ENCODE measurements at regions of chr2 and their contacts with region 1.

Region 1: DNA sequence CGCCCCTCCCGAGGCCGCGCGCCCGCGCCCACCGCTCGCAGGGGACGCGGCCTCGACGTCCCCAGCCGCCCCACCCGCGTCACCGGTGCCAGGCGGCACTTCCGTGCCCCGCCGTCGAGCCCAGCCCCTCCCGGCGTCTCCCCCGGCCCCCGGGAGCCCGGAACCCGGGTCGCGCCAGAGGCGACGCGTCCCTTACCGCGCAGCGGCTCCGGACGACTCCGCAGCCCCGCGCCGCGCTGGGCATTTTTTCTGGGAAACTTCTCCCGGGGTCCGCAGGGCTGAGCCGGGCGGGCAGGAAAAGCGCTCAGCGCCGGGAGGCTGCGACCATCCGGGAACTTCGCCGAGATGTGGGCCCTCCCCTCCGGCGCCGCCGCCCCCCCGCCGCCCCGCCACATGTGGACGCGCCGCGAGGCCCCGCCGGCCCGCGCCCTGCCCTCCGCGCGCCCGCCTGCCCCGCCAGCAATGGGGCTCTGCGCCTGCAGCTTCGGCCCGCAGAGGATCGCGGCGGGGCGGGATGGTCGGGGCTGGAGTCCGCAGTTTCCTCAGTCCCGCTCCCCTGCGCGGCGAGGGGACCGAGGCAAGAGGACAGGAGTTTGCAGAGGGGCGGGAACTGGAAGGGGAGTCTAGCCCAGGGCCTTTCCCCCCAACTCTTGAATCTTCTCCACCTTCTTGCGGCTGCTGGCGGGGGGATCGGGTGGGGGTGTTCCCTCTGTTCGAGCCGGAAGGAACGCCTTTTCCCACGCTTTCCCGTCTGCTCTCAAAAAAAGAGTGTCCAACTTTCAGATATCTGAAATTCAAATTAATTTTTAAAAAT is 81.5 kb downstream of the CHRNA1 start:
- DNase-seq: peak; percentile 70
- ATAC-seq: peak; percentile 70
- H3K4me3 Mint-ChIP-seq: peak overlapping the region; percentile 81
- H3K27ac Mint-ChIP-seq: peak overlapping the region; percentile 88
- H3K4me1 Mint-ChIP-seq: peaks cover 70% of the 10 kb centered on the region
- H3K27me3 Mint-ChIP-seq: no peaks in the 10 kb centered on the region

Region 2: GRCh38 chr2:174536304-174536703 is 146.5 kb before region 1 on chr2:
- CTCF ChIA-PET with region 1: no interaction called
- POLR2A ChIA-PET with region 1: no interaction called
- DNase-seq: no peak
- ATAC-seq: no peak
- H3K4me3 Mint-ChIP-seq: no peak overlapping the region
- H3K27ac Mint-ChIP-seq: no peak overlapping the region
- H3K4me1 Mint-ChIP-seq: peaks cover 3% of the 10 kb centered on the region
- H3K27me3 Mint-ChIP-seq: no peaks in the 10 kb centered on the region

Region 3: GRCh38 chr2:174593574-174594203 is 89.1 kb before region 1 on chr2:
- CTCF ChIA-PET with region 1: interaction called, 197 read pairs
- POLR2A ChIA-PET with region 1: interaction called, 33 read pairs
- DNase-seq: peak; percentile 89
- ATAC-seq: peak; percentile 73
- H3K4me3 Mint-ChIP-seq: peak overlapping the region; percentile 80
- H3K27ac Mint-ChIP-seq: peak overlapping the region; percentile 97
- H3K4me1 Mint-ChIP-seq: peaks cover 47% of the 10 kb centered on the region
- H3K27me3 Mint-ChIP-seq: no peaks in the 10 kb centered on the region

Region 4: DNA sequence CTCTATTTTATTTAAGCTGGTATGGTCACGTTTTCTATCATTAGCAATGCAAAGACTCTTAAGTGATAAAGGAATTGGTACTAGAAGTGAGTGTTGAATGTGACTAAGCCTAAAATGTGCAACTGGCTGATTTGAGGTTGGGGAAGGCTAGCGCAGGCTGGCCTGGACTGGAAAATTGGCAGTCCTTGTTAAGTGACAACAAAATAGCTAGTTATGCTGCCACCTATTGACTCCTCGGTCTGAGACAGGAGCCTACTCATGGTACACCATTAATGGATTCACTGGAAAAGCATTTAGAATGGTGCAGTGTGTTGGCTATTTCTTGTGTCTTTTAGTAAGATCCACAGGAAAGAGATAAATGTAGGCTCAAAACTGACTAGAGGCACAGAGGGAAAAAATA is 79.5 kb before region 1 on chr2:
- CTCF ChIA-PET with region 1: interaction called, 197 read pairs
- POLR2A ChIA-PET with region 1: interaction called, 5 read pairs
- DNase-seq: peak; percentile 68
- ATAC-seq: peak; percentile 54
- H3K4me3 Mint-ChIP-seq: no peak overlapping the region
- H3K27ac Mint-ChIP-seq: no peak overlapping the region
- H3K4me1 Mint-ChIP-seq: peaks cover 88% of the 10 kb centered on the region
- H3K27me3 Mint-ChIP-seq: no peaks in the 10 kb centered on the region

Region 5: DNA sequence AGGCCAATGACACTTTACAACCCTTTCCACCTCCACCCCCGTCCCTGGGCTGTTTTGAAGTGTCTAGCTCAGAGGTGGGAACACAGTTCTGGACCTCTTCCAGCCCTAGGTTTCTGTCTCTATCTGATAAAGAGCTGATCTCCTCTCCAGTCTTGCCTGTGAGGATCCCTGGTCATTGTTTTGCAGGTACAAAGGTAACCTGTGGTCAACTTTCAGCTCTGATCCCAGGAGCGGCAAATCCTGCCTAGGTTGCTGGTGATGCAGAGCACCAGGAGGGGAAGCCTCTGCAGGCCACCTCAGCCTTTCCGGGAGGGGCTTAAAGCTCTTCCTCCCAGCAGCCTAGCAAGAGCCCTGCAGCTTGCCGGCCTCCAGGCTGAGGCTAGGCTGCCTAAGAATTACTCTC is 15.4 kb before region 1 on chr2:
- CTCF ChIA-PET with region 1: interaction called, 10 read pairs
- POLR2A ChIA-PET with region 1: no interaction called
- DNase-seq: no peak
- ATAC-seq: peak; percentile 76
- H3K4me3 Mint-ChIP-seq: no peak overlapping the region
- H3K27ac Mint-ChIP-seq: peak overlapping the region; percentile 26
- H3K4me1 Mint-ChIP-seq: peaks cover 16% of the 10 kb centered on the region
- H3K27me3 Mint-ChIP-seq: no peaks in the 10 kb centered on the region